ENCODE measurements at regions of chr3 and their contacts with region 1.

Region 1: DNA sequence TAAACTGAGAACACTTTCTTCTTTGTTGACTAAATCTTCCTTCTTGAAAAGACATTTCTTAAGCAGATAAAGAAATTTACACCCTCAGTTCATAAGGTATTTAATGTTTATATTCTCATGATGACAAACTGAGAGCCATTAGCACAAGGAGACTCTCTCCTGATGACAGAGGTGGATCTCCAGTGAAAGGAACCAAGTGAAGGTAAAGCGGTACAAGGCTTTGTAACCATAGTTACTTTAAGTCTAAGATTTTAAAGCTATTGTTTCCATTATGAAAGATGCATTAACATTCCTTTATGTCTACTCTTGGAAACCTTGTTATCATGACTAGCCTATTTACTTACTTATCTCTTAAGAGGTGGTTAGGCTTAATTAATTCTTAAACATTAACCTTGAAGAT is 737.1 kb downstream of the MECOM start:
- DNase-seq: peak in 1 of 2 experiments; percentile 58
- H3K4me3 ChIP-seq: no peak overlapping the region
- H3K4me3 Mint-ChIP-seq: no peak overlapping the region
- H3K27ac Mint-ChIP-seq: peak overlapping the region; percentile 59
- H3K4me1 ChIP-seq: peaks cover 27% of the 10 kb centered on the region
- H3K4me1 Mint-ChIP-seq: peaks cover 19% of the 10 kb centered on the region
- H3K27me3 ChIP-seq: no peaks in the 10 kb centered on the region
- H3K27me3 Mint-ChIP-seq: no peaks in the 10 kb centered on the region
- CTCF ChIP-seq: no peak

Region 2: DNA sequence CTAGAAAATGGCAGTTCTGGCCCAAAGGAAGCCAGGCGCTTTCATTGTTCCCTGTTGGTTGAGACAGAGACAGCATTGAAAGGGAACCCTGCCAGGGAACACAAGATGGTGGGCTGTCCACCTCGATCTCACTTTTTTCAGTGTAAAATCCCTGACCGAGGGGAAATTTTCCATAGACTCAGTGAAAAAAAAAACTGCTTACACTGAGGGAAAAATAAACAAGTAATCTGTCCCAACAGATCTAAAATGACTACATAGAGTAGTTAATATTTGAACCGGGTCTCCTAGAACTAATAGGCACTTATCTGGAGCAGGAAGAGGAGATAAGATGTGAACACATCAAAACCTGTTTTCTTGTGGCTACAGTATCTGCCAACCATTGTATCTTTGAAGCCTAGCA is 67.3 kb before region 1 on chr3:
- CTCF ChIA-PET with region 1: no interaction called
- POLR2A ChIA-PET with region 1: no interaction called
- intact Hi-C with region 1: loop called (anchors 1 kb)
- DNase-seq: peak in 1 of 2 experiments; percentile 43
- H3K4me3 ChIP-seq: no peak overlapping the region
- H3K4me3 Mint-ChIP-seq: no peak overlapping the region
- H3K27ac Mint-ChIP-seq: peak overlapping the region; percentile 57
- H3K4me1 ChIP-seq: peaks cover 35% of the 10 kb centered on the region
- H3K4me1 Mint-ChIP-seq: peaks cover 15% of the 10 kb centered on the region
- H3K27me3 ChIP-seq: no peaks in the 10 kb centered on the region
- H3K27me3 Mint-ChIP-seq: no peaks in the 10 kb centered on the region
- CTCF ChIP-seq: no peak

Region 3: DNA sequence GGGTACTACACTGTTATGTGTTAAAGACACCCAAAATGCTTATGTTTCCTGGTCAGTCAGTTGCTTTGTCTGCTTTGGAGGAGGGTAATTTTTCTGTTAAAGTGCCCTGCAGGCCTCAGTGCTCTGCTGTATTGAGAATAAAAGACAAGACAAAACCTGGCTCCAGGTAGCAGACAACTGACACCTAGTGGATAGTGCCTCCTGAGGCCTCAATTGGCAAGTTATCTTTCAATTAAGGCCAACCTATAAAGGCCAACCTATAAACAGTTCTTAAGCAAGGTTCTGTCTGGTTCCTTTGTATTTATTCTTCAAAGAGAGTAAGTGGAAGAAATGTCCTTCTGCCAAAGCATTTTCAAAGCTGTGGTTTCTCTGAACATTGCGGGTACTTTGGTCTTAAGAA is 36.8 kb before region 1 on chr3:
- CTCF ChIA-PET with region 1: no interaction called
- POLR2A ChIA-PET with region 1: no interaction called
- intact Hi-C with region 1: loop called (anchors 1 kb)
- DNase-seq: no peak
- H3K4me3 ChIP-seq: no peak overlapping the region
- H3K4me3 Mint-ChIP-seq: no peak overlapping the region
- H3K27ac Mint-ChIP-seq: no peak overlapping the region
- H3K4me1 ChIP-seq: peaks cover 22% of the 10 kb centered on the region
- H3K4me1 Mint-ChIP-seq: peaks cover 10% of the 10 kb centered on the region
- H3K27me3 ChIP-seq: no peaks in the 10 kb centered on the region
- H3K27me3 Mint-ChIP-seq: no peaks in the 10 kb centered on the region
- CTCF ChIP-seq: no peak

Measured in Caco-2 (cell line).